ENCODE measurements at regions of chr20 and their contacts with region 1.

Region 1: GRCh38 chr20:63178889-63179686 is 36.8 kb downstream of the YTHDF1 start:
- DNase-seq: peak; percentile 46 to 84 (median 64)
- ATAC-seq: peak; percentile 82
- H3K4me3 ChIP-seq: peak overlapping the region; percentile 30
- H3K4me3 Mint-ChIP-seq: peak overlapping the region; percentile 65
- H3K27ac ChIP-seq: no peak overlapping the region
- H3K27ac Mint-ChIP-seq: no peak overlapping the region
- H3K4me1 ChIP-seq: peaks cover 30% of the 10 kb centered on the region
- H3K4me1 Mint-ChIP-seq: peaks cover 4% of the 10 kb centered on the region
- H3K27me3 ChIP-seq: peaks cover 49 to 69% of the 10 kb centered on the region in 2 experiments
- H3K27me3 Mint-ChIP-seq: peaks cover 41% of the 10 kb centered on the region
- CTCF ChIP-seq: peak; percentile 68

Region 2: DNA sequence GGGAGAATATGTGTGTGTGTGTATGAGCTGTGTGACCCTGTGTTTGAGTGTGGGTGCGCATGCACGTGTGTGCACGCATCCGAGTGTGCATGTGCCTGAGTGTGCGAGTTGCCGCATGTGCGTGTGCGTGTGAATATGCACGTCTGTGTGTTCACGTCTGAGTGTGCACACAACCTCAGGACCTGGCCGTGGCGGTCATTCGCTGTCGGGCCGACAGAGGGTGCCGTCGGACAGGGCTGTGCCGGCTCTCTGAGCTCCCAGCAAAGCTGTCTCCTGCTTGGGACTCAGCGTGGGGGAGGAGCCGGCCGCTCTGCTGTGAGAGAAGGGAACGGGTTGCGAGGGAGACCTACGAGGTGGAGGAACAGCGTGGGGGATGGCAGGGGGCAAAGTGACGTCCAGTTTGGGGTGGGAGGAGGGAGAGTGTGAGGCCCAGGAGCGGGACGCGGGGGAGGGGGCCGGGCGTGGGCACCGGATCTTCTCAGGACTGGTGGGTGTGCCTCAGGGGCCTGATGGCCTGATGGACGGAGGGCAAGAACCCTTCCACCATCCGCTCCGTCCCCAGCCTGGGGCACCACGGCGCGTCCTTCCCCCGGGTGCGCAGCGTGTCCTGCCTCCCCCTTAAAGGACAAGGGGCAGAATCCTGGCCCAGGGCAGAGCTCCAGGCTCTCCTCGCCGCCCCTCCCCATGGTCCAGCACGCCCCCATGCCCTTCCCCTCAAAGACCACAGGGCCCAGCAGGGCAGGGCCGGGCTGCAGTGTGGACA is 206.6 kb before region 1 on chr20:
- CTCF ChIA-PET with region 1: no interaction called
- POLR2A ChIA-PET with region 1: no interaction called
- intact Hi-C with region 1: loop called in 1 of 2 experiments (anchors 1 kb)
- DNase-seq: peak; percentile 77 to 90 (median 86)
- ATAC-seq: peak; percentile 100
- H3K4me3 ChIP-seq: peak overlapping the region; percentile 35
- H3K4me3 Mint-ChIP-seq: peak overlapping the region; percentile 76
- H3K27ac ChIP-seq: no peak overlapping the region
- H3K27ac Mint-ChIP-seq: no peak overlapping the region
- H3K4me1 ChIP-seq: peaks cover 19% of the 10 kb centered on the region
- H3K4me1 Mint-ChIP-seq: peaks cover 23% of the 10 kb centered on the region
- H3K27me3 ChIP-seq: peaks cover 38 to 44% of the 10 kb centered on the region in 2 experiments
- H3K27me3 Mint-ChIP-seq: peaks cover 53% of the 10 kb centered on the region
- CTCF ChIP-seq: peak; percentile 81

Region 3: GRCh38 chr20:63056236-63056948 is 122.7 kb before region 1 on chr20:
- CTCF ChIA-PET with region 1: interaction called, 3 read pairs
- POLR2A ChIA-PET with region 1: no interaction called
- intact Hi-C with region 1: loop called (anchors 1 kb)
- DNase-seq: peak in 11 of 14 experiments; percentile 17 to 67 (median 33)
- ATAC-seq: peak; percentile 72
- H3K4me3 ChIP-seq: no peak overlapping the region
- H3K4me3 Mint-ChIP-seq: no peak overlapping the region
- H3K27ac ChIP-seq: no peak overlapping the region
- H3K27ac Mint-ChIP-seq: no peak overlapping the region
- H3K4me1 ChIP-seq: peaks cover 8% of the 10 kb centered on the region
- H3K4me1 Mint-ChIP-seq: no peaks in the 10 kb centered on the region
- H3K27me3 ChIP-seq: peaks cover 10 to 16% of the 10 kb centered on the region in 2 experiments
- H3K27me3 Mint-ChIP-seq: peaks cover 16% of the 10 kb centered on the region
- CTCF ChIP-seq: peak; percentile 83

Region 4: DNA sequence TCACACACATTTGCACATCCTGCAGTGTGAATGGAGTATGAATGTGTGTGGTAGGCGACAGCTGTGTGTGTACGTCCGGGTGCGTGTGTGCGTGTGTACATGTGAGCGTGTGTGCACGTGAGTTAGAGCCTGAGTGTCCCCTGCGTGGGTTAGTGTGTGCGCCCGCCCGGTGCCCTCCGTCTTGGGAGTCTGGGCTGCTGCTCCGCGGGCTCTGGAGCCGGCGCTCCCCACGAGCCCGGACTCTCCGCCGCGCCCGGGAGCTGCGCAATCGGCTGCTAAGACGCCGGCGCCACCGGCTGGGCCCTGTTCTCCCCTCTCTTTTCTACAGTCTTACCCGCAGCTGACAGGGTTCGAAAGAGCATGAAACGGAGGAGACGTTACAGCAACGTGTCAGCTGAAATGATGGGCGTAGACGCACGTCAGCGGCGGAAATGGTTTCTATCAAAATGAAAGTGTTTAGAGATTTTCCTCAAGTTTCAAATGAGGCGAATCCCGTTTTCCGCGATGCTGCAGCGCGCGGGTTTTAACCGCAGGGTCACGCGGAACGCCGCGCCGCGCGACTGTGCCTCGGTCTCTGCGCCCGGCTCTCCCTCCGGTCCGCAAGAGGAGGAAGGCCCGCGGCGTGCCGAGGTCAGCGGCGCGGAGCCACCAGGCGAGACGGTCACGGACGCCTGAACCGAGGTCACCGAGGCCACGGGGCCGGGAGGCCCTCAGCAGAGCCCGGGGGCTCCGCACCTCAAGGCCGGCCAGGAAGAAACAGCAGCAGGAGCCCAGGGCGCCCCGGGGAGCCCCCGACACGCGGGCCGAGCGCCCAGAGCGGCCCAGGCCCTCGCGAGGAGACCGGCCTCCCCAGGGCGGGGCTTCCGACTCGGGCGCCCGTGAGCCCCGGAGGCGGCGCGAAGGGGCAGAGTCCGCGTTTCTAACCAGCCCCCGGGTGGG is 77.0 kb before region 1 on chr20:
- CTCF ChIA-PET with region 1: no interaction called
- POLR2A ChIA-PET with region 1: no interaction called
- intact Hi-C with region 1: loop called in 1 of 2 experiments (anchors 10 kb)
- DNase-seq: peak; percentile 33 to 84 (median 56)
- ATAC-seq: peak; percentile 69
- H3K4me3 ChIP-seq: peak overlapping the region; percentile 80
- H3K4me3 Mint-ChIP-seq: peak overlapping the region; percentile 97
- H3K27ac ChIP-seq: peak overlapping the region; percentile 81 to 85
- H3K27ac Mint-ChIP-seq: no peak overlapping the region
- H3K4me1 ChIP-seq: peaks cover 14% of the 10 kb centered on the region
- H3K4me1 Mint-ChIP-seq: peaks cover 12% of the 10 kb centered on the region
- H3K27me3 ChIP-seq: no peaks in the 10 kb centered on the region
- H3K27me3 Mint-ChIP-seq: peaks cover 7% of the 10 kb centered on the region
- CTCF ChIP-seq: no peak

Region 5: DNA sequence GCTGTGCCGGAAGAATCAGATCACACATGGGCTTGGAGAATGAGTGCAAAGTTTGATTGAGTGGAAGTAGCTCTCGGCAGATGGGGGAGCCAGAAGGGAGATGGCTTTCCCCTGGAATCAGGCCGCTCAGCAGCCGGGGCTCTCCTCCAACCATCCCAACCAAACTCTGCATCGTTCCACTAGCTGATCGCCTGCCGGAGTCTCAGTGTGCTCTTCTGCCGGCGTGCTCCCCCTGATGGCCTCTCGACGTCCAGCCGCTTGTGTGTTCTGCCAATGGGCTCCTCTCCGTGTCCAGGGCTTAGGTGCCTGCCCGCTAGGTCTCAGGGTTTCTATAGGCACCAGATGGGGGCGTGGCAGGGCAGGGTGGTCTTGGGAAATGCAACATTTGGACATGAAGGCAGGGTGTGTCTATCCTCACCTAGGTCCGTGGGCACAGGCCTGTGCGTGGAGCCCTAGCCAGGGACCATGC is 51.7 kb after region 1 on chr20:
- CTCF ChIA-PET with region 1: interaction called, 3 read pairs
- POLR2A ChIA-PET with region 1: no interaction called
- intact Hi-C with region 1: loop called in 1 of 2 experiments (anchors 2 kb)
- DNase-seq: peak in 3 of 14 experiments; percentile 7 to 35 (median 18)
- ATAC-seq: no peak
- H3K4me3 ChIP-seq: no peak overlapping the region
- H3K4me3 Mint-ChIP-seq: no peak overlapping the region
- H3K27ac ChIP-seq: no peak overlapping the region
- H3K27ac Mint-ChIP-seq: no peak overlapping the region
- H3K4me1 ChIP-seq: peaks cover 15% of the 10 kb centered on the region
- H3K4me1 Mint-ChIP-seq: peaks cover 4% of the 10 kb centered on the region
- H3K27me3 ChIP-seq: peaks cover 28 to 49% of the 10 kb centered on the region in 2 experiments
- H3K27me3 Mint-ChIP-seq: peaks cover 38% of the 10 kb centered on the region
- CTCF ChIP-seq: no peak

Region 6: DNA sequence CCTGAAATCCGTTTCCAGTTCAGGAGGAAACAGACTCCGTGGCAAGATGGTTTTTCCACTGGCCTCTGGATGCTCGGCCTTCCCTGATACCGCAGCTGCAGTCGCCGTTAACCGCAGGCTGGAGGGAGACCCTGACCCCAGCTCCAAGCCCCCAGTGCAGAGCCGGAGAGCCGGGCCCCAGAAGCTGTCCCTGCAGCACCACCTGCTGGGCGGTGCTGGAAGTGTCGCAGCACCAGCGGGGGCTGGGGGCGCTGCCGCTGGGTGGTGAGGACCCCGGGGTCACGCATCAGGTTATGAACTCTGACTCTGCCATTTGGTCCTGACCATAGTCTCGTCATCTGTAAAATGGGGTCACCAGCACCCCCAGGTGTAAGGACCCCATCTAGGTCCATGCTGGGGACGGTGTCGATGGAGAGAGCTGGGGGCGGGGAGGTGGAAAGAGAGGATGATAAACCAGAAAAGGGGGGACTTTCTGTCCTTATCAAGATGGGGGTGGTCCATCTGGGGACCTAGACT is 202.8 kb after region 1 on chr20:
- CTCF ChIA-PET with region 1: no interaction called
- POLR2A ChIA-PET with region 1: no interaction called
- intact Hi-C with region 1: loop called in 1 of 2 experiments (anchors 5 kb)
- DNase-seq: peak in 12 of 14 experiments; percentile 1 to 60 (median 25)
- ATAC-seq: no peak
- H3K4me3 ChIP-seq: no peak overlapping the region
- H3K4me3 Mint-ChIP-seq: no peak overlapping the region
- H3K27ac ChIP-seq: no peak overlapping the region
- H3K27ac Mint-ChIP-seq: no peak overlapping the region
- H3K4me1 ChIP-seq: peaks cover 3% of the 10 kb centered on the region
- H3K4me1 Mint-ChIP-seq: no peaks in the 10 kb centered on the region
- H3K27me3 ChIP-seq: peaks cover 14 to 31% of the 10 kb centered on the region in 2 experiments
- H3K27me3 Mint-ChIP-seq: peaks cover 26% of the 10 kb centered on the region
- CTCF ChIP-seq: peak; percentile 86